ENCODE measurements at regions of chr11 and their contacts with region 1.

Region 1: GRCh38 chr11:86571273-86571948 is 101.0 kb downstream of the ME3 start:
- DNase-seq: peak; percentile 76 to 87
- H3K4me3 ChIP-seq: no peak overlapping the region
- H3K27ac ChIP-seq: no peak overlapping the region
- H3K4me1 ChIP-seq: no peaks in the 10 kb centered on the region; a peak in 1 of 7 replicates
- H3K27me3 ChIP-seq: no peaks in the 10 kb centered on the region
- CTCF ChIP-seq: peak; percentile 82 to 99 (median 91)
- EP300 ChIP-seq: no peak
- POLR2A ChIP-seq: no peak
- RAD21 ChIP-seq: peak; percentile 67 to 81

Region 2: DNA sequence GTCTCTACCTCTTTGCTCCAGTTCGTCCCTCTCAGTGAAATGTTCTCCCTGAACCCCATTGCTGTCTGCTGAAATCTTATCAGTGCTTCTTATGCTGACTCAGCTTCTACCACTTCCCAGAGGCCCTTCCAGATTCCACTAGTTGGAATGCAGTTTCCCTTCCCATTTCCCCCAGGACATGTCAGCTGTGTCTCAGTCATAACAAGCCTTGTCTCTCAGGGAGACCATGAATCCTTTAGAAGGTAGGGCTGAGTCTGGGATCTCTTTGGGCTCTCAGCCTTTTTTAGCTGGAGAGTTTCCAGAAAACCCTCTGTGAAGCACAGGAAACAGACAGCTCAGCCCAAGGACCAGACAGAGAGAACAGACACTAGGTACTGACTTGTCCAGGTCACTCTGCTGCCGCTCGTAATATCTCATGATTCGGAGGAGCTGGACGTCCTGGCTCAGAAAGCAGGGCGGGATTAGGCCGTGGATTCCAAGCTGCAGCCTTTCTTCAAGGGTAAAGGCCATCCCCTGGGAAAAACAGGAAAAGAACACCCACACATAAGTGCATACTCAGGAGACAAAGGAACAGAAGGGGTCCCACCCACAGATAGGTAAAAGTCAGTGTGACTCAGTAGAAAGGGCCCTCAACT is 12.0 kb before region 1 on chr11:
- CTCF ChIA-PET with region 1: interaction called, 15 read pairs
- POLR2A ChIA-PET with region 1: no interaction called
- DNase-seq: no peak
- H3K4me3 ChIP-seq: no peak overlapping the region
- H3K27ac ChIP-seq: no peak overlapping the region; the same call in 1 of the 2 replicates
- H3K4me1 ChIP-seq: no peaks in the 10 kb centered on the region
- H3K27me3 ChIP-seq: no peaks in the 10 kb centered on the region
- CTCF ChIP-seq: no peak
- EP300 ChIP-seq: no peak
- POLR2A ChIP-seq: no peak
- RAD21 ChIP-seq: no peak

Region 3: DNA sequence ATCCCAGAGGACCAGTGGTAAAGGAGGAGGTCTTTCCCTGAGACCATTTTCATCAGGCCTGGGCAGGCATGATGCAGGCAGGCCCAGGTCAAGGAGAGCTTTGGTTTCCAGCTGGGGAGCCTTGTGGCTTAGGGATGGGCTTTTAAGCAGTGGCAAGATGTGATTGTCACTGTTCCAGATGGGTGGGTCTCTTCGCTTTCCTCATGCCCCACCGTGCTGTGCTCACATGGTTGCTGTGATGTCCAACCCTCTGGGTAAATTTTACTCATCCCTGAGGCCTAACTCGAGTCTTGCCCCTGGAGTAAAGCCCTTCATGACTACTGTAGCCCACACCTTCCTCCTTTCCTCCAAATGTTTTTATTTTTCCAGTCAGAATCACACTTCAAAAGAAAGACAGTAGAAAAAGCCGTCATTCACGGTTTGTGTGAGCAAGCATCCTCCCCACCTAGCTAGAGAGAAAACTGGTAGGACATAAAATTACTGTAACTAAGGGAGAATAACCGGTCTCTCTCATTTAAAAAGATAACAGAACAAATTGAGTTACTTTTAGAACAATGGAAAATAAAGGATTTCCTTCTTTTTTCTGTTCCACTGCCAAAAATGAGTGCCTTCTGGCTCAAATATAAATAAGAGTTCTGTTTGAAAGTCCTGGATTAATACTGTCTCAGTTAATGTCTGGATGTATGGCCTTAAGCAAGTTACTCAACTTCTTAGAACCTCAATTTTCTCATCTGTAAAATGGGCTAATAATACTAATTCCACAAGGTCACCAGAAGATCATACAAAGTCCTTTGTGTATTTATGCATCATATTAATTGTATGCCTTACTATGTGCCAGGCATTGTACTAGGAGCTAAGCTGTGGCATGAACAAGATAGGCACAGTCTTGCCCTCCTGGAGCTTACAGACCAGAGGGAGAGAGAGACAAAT is 16.1 kb after region 1 on chr11:
- CTCF ChIA-PET with region 1: interaction called, 20 read pairs
- POLR2A ChIA-PET with region 1: interaction called, 6 read pairs
- DNase-seq: no peak
- H3K4me3 ChIP-seq: no peak overlapping the region
- H3K27ac ChIP-seq: no peak overlapping the region
- H3K4me1 ChIP-seq: peaks cover 3 to 11% (median 8%) of the 10 kb centered on the region in 4 experiments; a peak in 6 of 7 replicates
- H3K27me3 ChIP-seq: no peaks in the 10 kb centered on the region
- CTCF ChIP-seq: no peak
- EP300 ChIP-seq: no peak
- POLR2A ChIP-seq: no peak
- RAD21 ChIP-seq: no peak